CD14-positive monocyte (primary cell): ENCODE measurements at regions of chr12 and their contacts with region 1.

Region 1: DNA sequence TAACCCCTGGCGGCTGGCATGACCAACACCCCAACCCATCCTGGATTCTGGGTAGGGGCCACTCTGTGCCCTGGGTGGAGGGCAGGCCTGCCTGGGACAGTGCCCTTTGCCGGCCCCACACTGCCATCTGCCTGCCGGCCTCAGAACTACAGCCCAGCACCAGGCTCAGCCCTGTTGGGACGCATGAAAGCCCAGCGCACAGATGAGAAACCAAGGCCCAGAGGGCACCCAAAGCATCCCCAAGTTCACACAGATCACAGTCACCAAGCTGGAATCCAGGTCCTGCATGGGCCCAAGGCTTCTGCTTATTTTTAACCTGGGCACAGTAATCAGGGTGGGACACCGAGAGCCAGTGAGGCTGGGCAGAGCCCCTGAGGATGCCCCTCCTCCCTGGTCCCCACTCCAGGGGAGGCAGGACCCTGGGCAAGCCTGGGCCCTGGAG is 26.2 kb downstream of the RFLNA start:
- DNase-seq: peak; percentile 48 to 69 (median 60)
- H3K4me3 ChIP-seq: no peak overlapping the region
- H3K4me3 Mint-ChIP-seq: no peak overlapping the region
- H3K27ac ChIP-seq: no peak overlapping the region
- H3K27ac Mint-ChIP-seq: peak overlapping the region in 1 of 7 donors; percentile 25
- H3K4me1 ChIP-seq: no peaks in the 10 kb centered on the region
- H3K4me1 Mint-ChIP-seq: peaks cover 2% of the 10 kb centered on the region
- H3K27me3 ChIP-seq: no peaks in the 10 kb centered on the region
- H3K27me3 Mint-ChIP-seq: peaks cover 2 to 11% (median 6%) of the 10 kb centered on the region in 3 donors
- CTCF ChIP-seq: peak; percentile 98

Region 2: GRCh38 chr12:124036674-124037109 is 284.4 kb before region 1 on chr12:
- intact Hi-C with region 1: loop called (anchors 1 to 2 kb)
- DNase-seq: peak; percentile 34 to 55 (median 44)
- H3K4me3 ChIP-seq: no peak overlapping the region
- H3K4me3 Mint-ChIP-seq: no peak overlapping the region
- H3K27ac ChIP-seq: no peak overlapping the region
- H3K27ac Mint-ChIP-seq: peak overlapping the region in 1 of 7 donors; percentile 19
- H3K4me1 ChIP-seq: peaks cover 0 to 4% of the 10 kb centered on the region in 2 donors
- H3K4me1 Mint-ChIP-seq: peaks cover 16% of the 10 kb centered on the region
- H3K27me3 ChIP-seq: no peaks in the 10 kb centered on the region
- H3K27me3 Mint-ChIP-seq: peaks cover 0 to 3% (median 3%) of the 10 kb centered on the region in 3 donors
- CTCF ChIP-seq: peak; percentile 95

Region 3: GRCh38 chr12:124053851-124054250 is 267.2 kb before region 1 on chr12:
- intact Hi-C with region 1: loop called in 1 of 2 experiments (anchors 5 kb)
- DNase-seq: peak; percentile 3 to 27 (median 10)
- H3K4me3 ChIP-seq: no peak overlapping the region
- H3K4me3 Mint-ChIP-seq: peak overlapping the region in 1 of 2 donors; percentile 43
- H3K27ac ChIP-seq: no peak overlapping the region
- H3K27ac Mint-ChIP-seq: no peak overlapping the region
- H3K4me1 ChIP-seq: no peaks in the 10 kb centered on the region
- H3K4me1 Mint-ChIP-seq: peaks cover 13% of the 10 kb centered on the region
- H3K27me3 ChIP-seq: no peaks in the 10 kb centered on the region
- H3K27me3 Mint-ChIP-seq: peaks cover 0 to 4% (median 0%) of the 10 kb centered on the region in 3 donors
- CTCF ChIP-seq: peak; percentile 61

Region 4: GRCh38 chr12:124162151-124162989 is 158.7 kb before region 1 on chr12:
- intact Hi-C with region 1: loop called in 1 of 2 experiments (anchors 5 kb)
- DNase-seq: peak in 1 of 3 donors; percentile 8
- H3K4me3 ChIP-seq: no peak overlapping the region
- H3K4me3 Mint-ChIP-seq: no peak overlapping the region
- H3K27ac ChIP-seq: no peak overlapping the region
- H3K27ac Mint-ChIP-seq: no peak overlapping the region
- H3K4me1 ChIP-seq: no peaks in the 10 kb centered on the region
- H3K4me1 Mint-ChIP-seq: no peaks in the 10 kb centered on the region
- H3K27me3 ChIP-seq: no peaks in the 10 kb centered on the region
- H3K27me3 Mint-ChIP-seq: peaks cover 0 to 2% (median 1%) of the 10 kb centered on the region in 3 donors
- CTCF ChIP-seq: peak; percentile 8